ENCODE measurements at regions of chr3 and their contacts with region 1.

Region 1: DNA sequence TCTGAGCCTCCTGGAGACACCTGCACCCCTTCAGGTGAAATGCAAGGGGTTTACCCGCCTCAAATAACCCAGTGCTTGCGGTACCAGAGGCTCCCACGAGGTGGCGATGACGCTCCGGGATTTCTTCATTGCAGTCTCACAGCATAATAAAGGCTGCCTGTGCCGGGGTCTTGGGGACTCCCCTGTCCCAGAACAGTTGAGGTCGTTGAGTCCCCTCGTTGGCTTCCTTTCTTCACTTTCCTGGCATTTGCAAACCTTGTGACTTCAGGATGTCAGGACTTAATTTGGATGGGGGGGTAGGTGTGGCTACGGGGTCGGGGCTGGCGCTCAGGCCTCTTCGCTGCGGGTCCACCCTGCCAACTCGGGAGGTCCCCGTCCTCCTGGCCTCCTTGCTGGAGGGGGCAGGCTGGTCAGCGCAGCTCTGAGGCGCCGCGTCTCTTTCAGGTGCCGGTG is 1.3 kb downstream of the GNAT1 start:
- DNase-seq: peak; percentile 96
- H3K4me3 Mint-ChIP-seq: no peak overlapping the region
- H3K27ac Mint-ChIP-seq: no peak overlapping the region
- H3K4me1 Mint-ChIP-seq: peaks cover 5% of the 10 kb centered on the region
- H3K27me3 Mint-ChIP-seq: peaks cover 23% of the 10 kb centered on the region

Region 2: DNA sequence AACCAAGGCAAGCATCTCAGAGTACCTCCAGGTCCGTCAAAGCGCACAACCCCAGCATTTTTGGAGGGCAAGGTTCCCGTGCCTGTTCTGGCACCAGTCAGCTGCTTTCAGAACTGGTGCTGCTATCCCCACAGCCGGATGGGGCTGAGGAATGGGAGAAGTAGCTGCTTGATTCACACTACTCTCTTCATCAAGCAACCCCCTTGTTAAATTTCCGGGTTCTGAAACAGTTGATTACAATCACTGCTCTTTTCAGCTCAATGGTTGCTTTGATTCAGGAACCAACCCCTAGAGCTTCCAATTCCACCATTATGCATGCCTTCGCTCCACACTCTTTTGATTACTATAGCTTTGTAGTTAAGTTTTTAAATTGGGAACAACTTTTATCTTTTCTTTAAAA is 366.7 kb before region 1 on chr3:
- intact Hi-C with region 1: no loop called
- DNase-seq: no peak
- H3K4me3 Mint-ChIP-seq: no peak overlapping the region
- H3K27ac Mint-ChIP-seq: no peak overlapping the region
- H3K4me1 Mint-ChIP-seq: no peaks in the 10 kb centered on the region
- H3K27me3 Mint-ChIP-seq: no peaks in the 10 kb centered on the region

Region 3: GRCh38 chr3:50121416-50122032 is 71.2 kb before region 1 on chr3:
- intact Hi-C with region 1: loop called (anchors 1 kb)
- DNase-seq: peak; percentile 89
- H3K4me3 Mint-ChIP-seq: no peak overlapping the region
- H3K27ac Mint-ChIP-seq: no peak overlapping the region
- H3K4me1 Mint-ChIP-seq: no peaks in the 10 kb centered on the region
- H3K27me3 Mint-ChIP-seq: no peaks in the 10 kb centered on the region

Region 4: DNA sequence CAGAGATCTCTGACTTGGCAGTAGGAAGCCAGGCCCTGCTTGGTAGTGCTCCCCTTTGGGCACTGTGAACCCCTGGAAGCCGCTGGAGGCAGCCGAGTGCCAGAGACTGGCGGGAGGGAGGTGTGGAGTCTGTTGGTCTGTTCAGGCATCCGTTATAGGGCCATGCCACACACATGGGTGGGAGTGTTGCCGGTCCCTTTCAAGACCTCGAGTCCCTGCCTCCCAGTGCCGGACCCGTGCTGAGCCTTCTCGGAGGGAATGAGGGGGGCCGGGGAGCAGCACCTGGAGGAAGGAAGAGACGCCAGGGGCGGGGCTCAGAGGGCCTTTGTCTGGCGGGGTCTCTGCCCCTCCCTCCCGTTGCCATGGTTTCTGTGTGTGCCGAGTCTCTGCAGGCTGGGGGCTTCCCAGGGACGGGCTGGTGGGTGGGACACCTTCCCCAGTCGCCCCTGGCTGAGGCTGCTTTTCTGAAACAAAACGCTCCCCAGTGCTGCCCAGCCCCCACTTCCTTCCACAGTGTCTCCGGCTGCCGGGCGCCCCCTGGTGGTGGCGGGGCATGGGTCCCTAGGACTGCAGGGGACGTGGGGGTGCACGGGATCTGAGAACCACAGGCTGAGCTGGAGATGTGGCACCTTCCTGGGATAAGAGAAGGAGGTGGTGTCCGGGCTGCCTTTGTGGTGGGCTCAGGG is 53.3 kb after region 1 on chr3:
- intact Hi-C with region 1: loop called (anchors 1 kb)
- DNase-seq: peak; percentile 98
- H3K4me3 Mint-ChIP-seq: peak overlapping the region; percentile 86
- H3K27ac Mint-ChIP-seq: peak overlapping the region; percentile 92
- H3K4me1 Mint-ChIP-seq: peaks cover 57% of the 10 kb centered on the region
- H3K27me3 Mint-ChIP-seq: no peaks in the 10 kb centered on the region

Region 5: GRCh38 chr3:50272911-50273693 is 80.4 kb after region 1 on chr3:
- intact Hi-C with region 1: loop called (anchors 1 kb)
- DNase-seq: peak; percentile 97
- H3K4me3 Mint-ChIP-seq: peak overlapping the region; percentile 86
- H3K27ac Mint-ChIP-seq: no peak overlapping the region
- H3K4me1 Mint-ChIP-seq: peaks cover 28% of the 10 kb centered on the region
- H3K27me3 Mint-ChIP-seq: peaks cover 39% of the 10 kb centered on the region

Region 6: DNA sequence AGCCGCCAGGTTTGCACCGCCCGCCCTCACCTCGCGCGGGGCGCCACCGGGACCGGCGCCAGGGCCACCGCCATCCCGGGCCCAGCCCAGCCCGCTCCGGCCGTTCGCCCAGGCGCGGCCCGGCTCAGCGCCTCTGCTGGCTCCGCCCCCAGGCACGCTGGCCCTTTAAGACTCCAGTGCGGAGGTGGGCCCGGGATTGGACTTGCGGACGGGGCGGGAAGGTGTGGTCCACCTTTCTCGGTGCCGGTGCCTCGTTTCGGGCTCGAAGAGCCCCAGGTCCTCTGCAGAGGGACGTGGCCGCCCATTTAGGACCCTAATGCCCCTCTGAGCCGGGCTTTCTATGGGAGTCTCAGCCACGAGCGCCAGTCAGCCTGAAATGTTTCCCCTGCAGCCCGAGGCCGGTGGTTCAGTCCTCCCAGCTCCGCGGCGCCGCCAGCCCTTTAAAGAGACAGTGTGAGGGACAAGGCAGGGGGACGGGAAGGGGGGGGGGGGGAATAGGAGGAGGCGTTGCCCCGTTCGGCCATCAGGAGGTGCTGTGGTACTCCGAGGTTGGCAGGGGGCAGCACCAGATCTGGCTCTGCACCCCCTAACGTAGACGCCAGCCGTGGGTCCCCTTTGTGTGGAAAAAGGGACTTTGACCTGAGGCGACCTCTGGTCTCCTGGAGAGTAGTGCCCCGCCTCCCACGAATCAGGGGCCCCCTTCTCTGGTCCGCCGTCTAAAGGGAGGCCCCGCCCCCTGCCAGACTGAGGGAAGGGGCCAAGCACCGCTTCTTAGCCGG is 128.8 kb after region 1 on chr3:
- intact Hi-C with region 1: loop called (anchors 2 kb)
- DNase-seq: peak; percentile 96
- H3K4me3 Mint-ChIP-seq: peak overlapping the region; percentile 88
- H3K27ac Mint-ChIP-seq: peak overlapping the region; percentile 92
- H3K4me1 Mint-ChIP-seq: peaks cover 27% of the 10 kb centered on the region
- H3K27me3 Mint-ChIP-seq: no peaks in the 10 kb centered on the region

Region 7: GRCh38 chr3:50714946-50715345 is 522.2 kb after region 1 on chr3:
- intact Hi-C with region 1: no loop called
- DNase-seq: no peak
- H3K4me3 Mint-ChIP-seq: no peak overlapping the region
- H3K27ac Mint-ChIP-seq: no peak overlapping the region
- H3K4me1 Mint-ChIP-seq: no peaks in the 10 kb centered on the region
- H3K27me3 Mint-ChIP-seq: peaks cover 3% of the 10 kb centered on the region